CD4-positive, alpha-beta memory T cell (primary cell): ENCODE measurements at regions of chr4 and their contacts with region 1.

Region 1: DNA sequence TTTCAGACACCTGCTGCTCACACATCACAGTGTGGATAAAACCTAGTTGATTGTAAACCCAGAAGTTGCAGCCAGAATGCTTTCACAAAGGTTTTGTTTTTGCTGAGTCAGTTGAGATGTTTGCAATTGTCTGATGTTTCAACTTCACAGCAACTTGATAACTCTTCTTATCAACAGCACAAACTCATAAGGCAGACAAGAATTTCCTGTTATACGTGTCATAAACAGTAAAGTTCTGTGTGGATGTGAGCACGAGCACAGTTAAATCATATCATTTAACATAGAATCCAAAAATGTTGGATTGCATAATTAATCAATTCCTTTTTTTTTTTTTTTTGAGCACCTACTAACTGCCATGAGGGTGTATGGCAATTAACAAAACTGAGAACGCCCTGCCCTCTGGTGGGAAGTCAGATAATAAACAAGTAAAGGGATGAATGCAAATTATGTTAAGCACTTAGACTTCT is 512.2 kb downstream of the PDHA2 start:
- DNase-seq: no peak
- H3K4me3 ChIP-seq: no peak overlapping the region
- H3K4me3 Mint-ChIP-seq: no peak overlapping the region
- H3K27ac ChIP-seq: no peak overlapping the region
- H3K27ac Mint-ChIP-seq: no peak overlapping the region
- H3K4me1 ChIP-seq: no peaks in the 10 kb centered on the region
- H3K4me1 Mint-ChIP-seq: peaks cover 0 to 3% (median 0%) of the 10 kb centered on the region in 4 donors
- H3K27me3 ChIP-seq: no peaks in the 10 kb centered on the region
- H3K27me3 Mint-ChIP-seq: no peaks in the 10 kb centered on the region

Region 2: GRCh38 chr4:95155759-95156451 is 1196.2 kb before region 1 on chr4:
- CTCF ChIA-PET with region 1: no interaction called
- POLR2A ChIA-PET with region 1: no interaction called
- intact Hi-C with region 1: loop called (anchors 5 kb)
- DNase-seq: peak in 4 of 5 donors; percentile 49 to 63 (median 56)
- H3K4me3 ChIP-seq: no peak overlapping the region
- H3K4me3 Mint-ChIP-seq: peak overlapping the region in 6 of 8 donors; percentile 28 to 80 (median 59)
- H3K27ac ChIP-seq: no peak overlapping the region
- H3K27ac Mint-ChIP-seq: peak overlapping the region in 3 of 7 donors; percentile 19 to 82 (median 61)
- H3K4me1 ChIP-seq: peaks cover 16% of the 10 kb centered on the region
- H3K4me1 Mint-ChIP-seq: peaks cover 8 to 22% (median 12%) of the 10 kb centered on the region in 4 donors
- H3K27me3 ChIP-seq: no peaks in the 10 kb centered on the region
- H3K27me3 Mint-ChIP-seq: no peaks in the 10 kb centered on the region